Left cardiac atrium (tissue), 4 donors: ENCODE measurements at regions of chrX and their contacts with region 1.

Region 1: GRCh38 chrX:120499301-120500072 is 30.4 kb upstream of the LAMP2 start:
- DNase-seq: no peak
- ATAC-seq: no peak

Region 2: DNA sequence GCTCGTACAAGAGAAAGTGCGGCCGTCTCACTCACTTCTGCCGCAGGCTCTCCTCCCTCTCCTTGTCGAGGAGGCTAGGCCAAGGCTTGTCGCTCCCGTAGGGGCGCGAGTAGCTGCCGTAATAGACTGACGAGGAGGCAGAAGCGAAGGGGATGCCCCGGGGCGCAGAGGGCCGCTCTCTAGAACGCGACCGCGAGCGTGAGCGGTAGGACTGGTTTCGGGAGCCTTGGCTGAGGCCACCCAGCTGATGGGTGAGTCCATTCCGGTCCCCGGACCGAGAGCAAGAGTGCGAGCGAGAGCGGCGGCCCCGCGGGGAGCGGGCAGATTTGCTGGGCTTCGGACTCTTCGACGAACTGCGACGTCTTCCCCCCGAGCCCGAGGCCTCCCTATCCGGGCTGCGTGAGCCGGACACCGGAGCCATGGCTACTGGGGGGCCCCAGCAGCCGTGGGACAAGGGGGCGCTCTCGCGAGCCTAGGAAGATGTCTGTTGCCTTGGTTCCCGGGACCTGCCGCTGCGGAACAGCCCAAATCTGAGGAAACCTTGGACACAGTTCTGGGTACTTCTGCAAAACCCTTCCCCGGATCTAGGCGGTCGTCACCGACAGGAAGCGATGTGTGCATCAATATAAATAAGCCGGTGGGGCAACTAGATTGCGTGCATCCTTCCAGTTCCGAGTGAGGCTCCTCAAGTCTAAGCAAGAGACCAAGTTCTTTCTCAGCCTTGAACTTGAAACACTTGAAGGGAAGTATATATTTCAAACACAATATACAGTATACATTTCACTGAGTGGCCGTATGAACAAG is 556.1 kb before region 1 on chrX and contains the start of gene NKAP:
- intact Hi-C with region 1: no loop called
- DNase-seq: peak; percentile 80
- ATAC-seq: peak; percentile 95 to 98
- total RNA-seq, gene NKAP: 4.4 to 6.8 TPM

Region 3: GRCh38 chrX:120664081-120664480 is 164.6 kb after region 1 on chrX:
- intact Hi-C with region 1: loop called in 1 of 2 experiments (anchors 10 kb)
- DNase-seq: no peak
- ATAC-seq: no peak

Region 4: DNA sequence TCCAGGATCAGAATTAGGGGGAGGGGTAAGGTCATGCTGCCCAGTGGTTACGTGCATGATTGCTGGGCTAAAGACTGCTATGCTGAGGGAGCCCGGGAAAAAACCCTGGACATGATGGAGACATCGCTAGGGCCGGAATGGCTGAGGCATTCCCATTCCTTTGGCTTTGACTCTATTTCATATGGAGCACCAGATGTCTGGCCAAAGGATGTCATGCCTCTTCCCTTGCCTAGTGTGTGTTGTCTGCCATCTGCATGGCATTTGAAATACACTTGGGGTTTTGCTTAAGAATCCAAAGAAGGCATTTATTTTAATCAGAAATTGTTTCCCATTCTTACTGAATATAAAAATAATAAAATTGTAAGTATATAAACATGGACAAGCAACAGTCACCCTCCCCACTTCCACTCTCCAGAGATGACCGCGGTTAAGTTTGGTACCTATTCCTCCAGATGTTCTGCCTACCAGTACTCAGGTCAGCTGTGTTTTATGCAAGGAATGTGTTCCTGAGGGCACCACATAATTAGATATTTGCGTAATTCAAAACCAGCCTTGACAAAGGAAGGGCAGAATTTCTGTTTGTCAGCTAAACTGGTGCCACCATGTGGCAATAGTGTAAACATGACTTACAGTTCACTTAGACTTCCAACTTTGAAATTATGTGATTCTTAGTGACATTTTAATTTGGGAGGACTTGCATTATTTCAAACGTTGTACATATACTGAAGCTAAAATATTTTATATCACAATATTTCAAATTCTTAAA is 270.3 kb after region 1 on chrX:
- intact Hi-C with region 1: loop called (anchors 2 to 10 kb)
- DNase-seq: no peak
- ATAC-seq: peak in 1 of 2 donors; percentile 19